IMR-90 (cell line): ENCODE measurements at regions of chr5 and their contacts with region 1.

Region 1: GRCh38 chr5:57221049-57221568 is 47.2 kb downstream of the GPBP1 start:
- DNase-seq: peak; percentile 65
- ATAC-seq: peak; percentile 86
- H3K4me3 ChIP-seq: no peak overlapping the region
- H3K27ac ChIP-seq: no peak overlapping the region
- H3K4me1 ChIP-seq: peaks cover 8% of the 10 kb centered on the region
- H3K27me3 ChIP-seq: no peaks in the 10 kb centered on the region
- CTCF ChIP-seq: peak; percentile 93
- POLR2A ChIP-seq: no peak
- RAD21 ChIP-seq: peak; percentile 91

Region 2: DNA sequence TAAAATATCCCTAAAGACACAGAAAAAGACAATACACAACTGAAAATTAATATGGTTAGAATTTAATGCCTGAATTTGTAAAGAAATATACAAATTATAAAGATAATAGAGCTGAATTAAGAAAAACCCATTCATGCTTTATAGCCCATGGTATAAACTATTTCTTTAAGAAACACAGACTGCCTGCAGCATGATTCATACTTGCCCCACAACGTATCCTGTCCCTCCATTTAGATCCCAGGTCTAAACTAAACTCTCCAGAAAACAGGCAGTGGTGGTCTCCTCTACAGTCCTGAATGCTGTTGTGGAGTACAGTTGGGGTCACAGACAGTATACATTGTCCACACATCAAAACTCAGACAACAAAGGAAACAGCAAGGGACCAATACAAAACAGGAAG is 1251.2 kb before region 1 on chr5:
- CTCF ChIA-PET with region 1: no interaction called
- POLR2A ChIA-PET with region 1: no interaction called
- dilution Hi-C with region 1: no loop called
- in situ Hi-C with region 1: loop called (anchors 25 kb)
- intact Hi-C with region 1: no loop called
- DNase-seq: peak; percentile 54
- ATAC-seq: peak; percentile 88
- H3K4me3 ChIP-seq: no peak overlapping the region
- H3K27ac ChIP-seq: peak overlapping the region; percentile 45
- H3K4me1 ChIP-seq: peaks cover 5% of the 10 kb centered on the region
- H3K27me3 ChIP-seq: no peaks in the 10 kb centered on the region
- CTCF ChIP-seq: no peak
- POLR2A ChIP-seq: no peak
- RAD21 ChIP-seq: no peak

Region 3: GRCh38 chr5:56900858-56901578 is 320.1 kb before region 1 on chr5:
- CTCF ChIA-PET with region 1: interaction called, 3 read pairs
- POLR2A ChIA-PET with region 1: no interaction called
- dilution Hi-C with region 1: no loop called
- in situ Hi-C with region 1: loop called (anchors 10 kb)
- intact Hi-C with region 1: loop called (anchors 1 kb)
- DNase-seq: peak; percentile 38
- ATAC-seq: peak; percentile 84
- H3K4me3 ChIP-seq: no peak overlapping the region
- H3K27ac ChIP-seq: no peak overlapping the region
- H3K4me1 ChIP-seq: no peaks in the 10 kb centered on the region; the same call in 1 of the 2 replicates
- H3K27me3 ChIP-seq: no peaks in the 10 kb centered on the region; the same call in 1 of the 2 replicates
- CTCF ChIP-seq: peak; percentile 78
- POLR2A ChIP-seq: no peak
- RAD21 ChIP-seq: peak; percentile 72

Region 4: GRCh38 chr5:56941981-56942380 is 279.1 kb before region 1 on chr5:
- CTCF ChIA-PET with region 1: no interaction called
- POLR2A ChIA-PET with region 1: no interaction called
- dilution Hi-C with region 1: no loop called
- in situ Hi-C with region 1: loop called (anchors 10 kb)
- intact Hi-C with region 1: no loop called
- DNase-seq: peak; percentile 55
- ATAC-seq: no peak; the same call in 1 of the 2 replicates
- H3K4me3 ChIP-seq: no peak overlapping the region
- H3K27ac ChIP-seq: no peak overlapping the region
- H3K4me1 ChIP-seq: no peaks in the 10 kb centered on the region; the same call in 1 of the 2 replicates
- H3K27me3 ChIP-seq: no peaks in the 10 kb centered on the region
- CTCF ChIP-seq: no peak
- POLR2A ChIP-seq: no peak
- RAD21 ChIP-seq: no peak

Region 5: GRCh38 chr5:57137401-57137800 is 83.7 kb before region 1 on chr5:
- CTCF ChIA-PET with region 1: interaction called, 4 read pairs
- POLR2A ChIA-PET with region 1: no interaction called
- dilution Hi-C with region 1: no loop called
- in situ Hi-C with region 1: no loop called
- intact Hi-C with region 1: loop called (anchors 2 kb)
- DNase-seq: no peak
- ATAC-seq: no peak
- H3K4me3 ChIP-seq: no peak overlapping the region
- H3K27ac ChIP-seq: no peak overlapping the region
- H3K4me1 ChIP-seq: no peaks in the 10 kb centered on the region
- H3K27me3 ChIP-seq: peaks cover 1% of the 10 kb centered on the region; the same call in 1 of the 2 replicates
- CTCF ChIP-seq: no peak
- POLR2A ChIP-seq: no peak
- RAD21 ChIP-seq: no peak